WTC11 (cell line): ENCODE measurements at regions of chr14 and their contacts with region 1.

Region 1: DNA sequence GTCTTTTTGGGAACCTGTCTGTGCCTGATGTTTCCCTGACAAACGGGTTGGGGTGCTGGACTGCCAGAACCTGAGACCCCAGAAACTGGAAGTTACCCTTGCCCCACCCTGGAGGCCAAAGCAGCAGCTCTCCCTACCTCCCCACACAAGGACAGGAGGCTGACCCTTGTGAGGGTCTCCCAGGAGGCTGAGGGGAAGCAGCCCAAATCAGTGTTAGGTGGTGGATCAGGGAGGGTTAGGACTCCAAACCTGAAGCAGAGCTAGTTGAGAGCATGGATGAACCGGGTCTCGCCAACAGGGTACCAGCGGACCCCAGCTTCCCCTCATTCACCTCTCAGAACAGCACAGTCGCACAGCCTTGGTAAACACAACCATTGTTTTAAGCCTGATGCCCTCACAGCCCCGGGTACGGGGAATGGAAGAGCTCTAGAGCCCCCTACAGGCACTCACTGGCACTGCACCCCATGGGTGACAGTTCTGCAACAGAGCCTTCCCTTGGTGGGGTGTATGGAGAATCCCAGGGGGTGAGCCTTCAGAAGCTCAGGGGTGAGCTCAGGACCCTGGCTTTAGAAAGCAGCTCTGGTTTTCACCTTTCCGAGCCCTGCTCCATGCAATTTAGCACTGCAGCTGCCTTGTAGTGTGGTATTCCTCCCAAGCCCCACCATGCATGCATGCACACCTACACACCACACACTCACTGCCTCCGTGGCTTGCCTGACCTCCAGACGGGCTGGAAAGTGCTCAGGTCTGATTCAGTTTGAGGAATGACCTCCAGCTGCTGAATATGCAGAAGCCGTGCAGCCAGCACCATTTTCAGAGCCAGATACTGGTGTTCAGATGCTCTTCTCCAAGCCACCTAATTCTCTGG is 11.2 kb downstream of the ESRRB start:
- DNase-seq: peak; percentile 91
- ATAC-seq: peak; percentile 97
- H3K4me3 Mint-ChIP-seq: no peak overlapping the region
- H3K27ac Mint-ChIP-seq: no peak overlapping the region
- H3K4me1 Mint-ChIP-seq: peaks cover 4% of the 10 kb centered on the region; the same call in 1 of the 2 replicates
- H3K27me3 Mint-ChIP-seq: 0 out of 2 replicates have a peak, but pooled peaks cover 3% of the 10 kb centered on the region
- CTCF ChIP-seq: peak; percentile 99

Region 2: DNA sequence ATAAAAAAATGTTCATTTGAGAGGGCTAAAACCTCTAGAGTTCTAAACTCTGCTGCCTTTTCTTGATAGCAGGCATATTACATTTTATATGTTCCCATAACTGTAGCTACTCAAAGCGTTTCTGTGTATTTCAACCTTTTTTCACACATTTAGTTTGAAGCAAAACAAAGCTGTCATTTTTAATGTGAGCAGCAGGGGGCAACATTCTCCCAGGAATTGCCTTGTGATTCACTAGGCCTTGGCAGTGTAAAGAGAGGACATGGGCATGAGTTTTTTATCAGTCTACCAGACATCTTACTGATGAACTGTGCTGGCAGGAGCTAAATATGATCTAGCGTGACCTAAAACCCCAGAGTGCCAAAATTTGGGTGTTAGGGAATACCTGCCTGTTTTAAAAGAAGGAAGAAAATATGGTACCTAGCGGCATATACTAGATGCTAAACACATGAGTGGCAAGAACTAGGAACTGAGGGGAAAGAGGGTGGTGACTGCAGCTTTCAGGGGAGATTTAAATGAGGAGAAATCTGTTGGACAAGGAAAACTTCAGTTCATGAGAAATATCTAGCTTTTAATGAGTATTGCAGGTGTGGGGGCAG is 336.3 kb before region 1 on chr14:
- CTCF ChIA-PET with region 1: interaction called, 35 read pairs
- POLR2A ChIA-PET with region 1: no interaction called
- DNase-seq: peak; percentile 61
- ATAC-seq: peak; percentile 51
- H3K4me3 Mint-ChIP-seq: no peak overlapping the region
- H3K27ac Mint-ChIP-seq: no peak overlapping the region
- H3K4me1 Mint-ChIP-seq: peaks cover 3% of the 10 kb centered on the region
- H3K27me3 Mint-ChIP-seq: no peaks in the 10 kb centered on the region
- CTCF ChIP-seq: peak; percentile 76

Region 3: DNA sequence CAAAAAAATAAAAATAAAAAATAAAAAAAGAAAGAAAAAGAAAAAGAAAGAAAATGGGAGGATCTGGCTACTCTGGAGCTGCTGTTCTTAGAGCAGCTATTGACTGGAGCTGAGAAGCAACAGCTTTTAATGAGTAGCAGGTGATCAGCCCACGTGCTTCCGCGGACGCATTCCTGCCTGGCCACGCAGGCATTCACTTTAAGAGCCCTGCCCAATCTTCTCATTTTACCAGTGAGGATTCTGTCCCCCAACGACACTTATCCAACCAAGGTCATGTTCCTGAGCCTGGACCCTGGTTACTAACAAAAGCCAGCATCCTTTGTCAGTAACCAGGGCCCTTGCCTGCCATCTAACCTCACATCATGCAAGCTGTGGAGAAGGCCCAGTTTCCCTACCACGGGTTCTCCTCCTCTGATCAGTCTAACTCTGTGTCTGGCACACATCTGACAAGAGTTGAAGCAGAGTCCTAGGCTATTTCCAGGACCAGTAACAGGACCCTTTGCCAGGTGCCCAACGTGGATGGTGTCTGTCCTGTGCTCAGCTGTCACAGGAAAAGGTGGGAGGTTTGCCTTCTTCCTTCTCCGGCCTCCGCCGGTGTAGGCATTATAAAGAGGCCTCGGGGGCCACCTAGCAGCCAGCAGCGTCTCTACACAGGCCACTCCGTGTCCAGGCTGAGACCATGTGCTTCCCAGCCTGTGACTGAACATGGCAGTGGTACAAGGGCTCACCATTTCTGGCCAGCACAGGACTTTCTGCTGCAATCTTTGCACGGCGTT is 296.3 kb before region 1 on chr14:
- CTCF ChIA-PET with region 1: interaction called, 10 read pairs
- POLR2A ChIA-PET with region 1: no interaction called
- DNase-seq: no peak
- ATAC-seq: 0 out of 2 replicates have a peak, but pooled peaks have one; percentile 38
- H3K4me3 Mint-ChIP-seq: no peak overlapping the region
- H3K27ac Mint-ChIP-seq: no peak overlapping the region
- H3K4me1 Mint-ChIP-seq: peaks cover 28% of the 10 kb centered on the region
- H3K27me3 Mint-ChIP-seq: no peaks in the 10 kb centered on the region; the same call in 1 of the 2 replicates
- CTCF ChIP-seq: no peak

Region 4: GRCh38 chr14:76352639-76353281 is 34.4 kb before region 1 on chr14:
- CTCF ChIA-PET with region 1: interaction called, 24 read pairs
- POLR2A ChIA-PET with region 1: no interaction called
- DNase-seq: peak; percentile 88
- ATAC-seq: peak; percentile 90
- H3K4me3 Mint-ChIP-seq: peak overlapping the region; percentile 56
- H3K27ac Mint-ChIP-seq: no peak overlapping the region
- H3K4me1 Mint-ChIP-seq: peaks cover 30% of the 10 kb centered on the region
- H3K27me3 Mint-ChIP-seq: peaks cover 36% of the 10 kb centered on the region
- CTCF ChIP-seq: peak; percentile 64

Region 5: DNA sequence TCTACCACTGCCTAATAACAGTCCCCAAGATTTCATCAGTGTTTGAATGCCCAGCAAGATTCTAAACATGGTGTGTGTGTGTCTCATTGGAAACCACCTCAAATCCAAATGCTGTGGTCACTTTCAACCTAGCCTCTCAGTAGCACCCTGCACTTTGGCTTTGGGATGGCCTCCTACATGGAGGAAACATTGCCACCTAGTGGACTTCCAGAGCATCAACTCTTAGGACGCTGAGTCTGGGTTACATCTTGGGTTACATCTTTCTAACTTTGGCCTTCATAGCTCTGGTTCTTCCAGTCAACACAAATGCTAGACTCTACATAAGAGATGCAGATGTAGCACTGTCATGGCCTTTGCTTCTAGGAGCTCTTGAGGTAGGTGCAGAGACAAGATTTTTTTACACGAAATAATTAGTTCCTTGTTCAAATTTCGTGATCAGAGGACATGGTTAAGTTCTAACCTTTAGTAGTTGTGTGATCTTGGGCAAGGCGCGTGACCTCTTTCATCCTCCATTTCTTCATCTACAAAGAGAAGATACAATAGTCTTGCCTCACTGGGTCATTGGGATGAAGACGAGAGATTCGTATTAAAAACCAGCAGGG is 260.6 kb after region 1 on chr14:
- CTCF ChIA-PET with region 1: interaction called, 10 read pairs
- POLR2A ChIA-PET with region 1: no interaction called
- DNase-seq: peak; percentile 32
- ATAC-seq: peak; percentile 73
- H3K4me3 Mint-ChIP-seq: no peak overlapping the region
- H3K27ac Mint-ChIP-seq: no peak overlapping the region
- H3K4me1 Mint-ChIP-seq: peaks cover 13% of the 10 kb centered on the region
- H3K27me3 Mint-ChIP-seq: no peaks in the 10 kb centered on the region
- CTCF ChIP-seq: peak; percentile 69

Region 6: DNA sequence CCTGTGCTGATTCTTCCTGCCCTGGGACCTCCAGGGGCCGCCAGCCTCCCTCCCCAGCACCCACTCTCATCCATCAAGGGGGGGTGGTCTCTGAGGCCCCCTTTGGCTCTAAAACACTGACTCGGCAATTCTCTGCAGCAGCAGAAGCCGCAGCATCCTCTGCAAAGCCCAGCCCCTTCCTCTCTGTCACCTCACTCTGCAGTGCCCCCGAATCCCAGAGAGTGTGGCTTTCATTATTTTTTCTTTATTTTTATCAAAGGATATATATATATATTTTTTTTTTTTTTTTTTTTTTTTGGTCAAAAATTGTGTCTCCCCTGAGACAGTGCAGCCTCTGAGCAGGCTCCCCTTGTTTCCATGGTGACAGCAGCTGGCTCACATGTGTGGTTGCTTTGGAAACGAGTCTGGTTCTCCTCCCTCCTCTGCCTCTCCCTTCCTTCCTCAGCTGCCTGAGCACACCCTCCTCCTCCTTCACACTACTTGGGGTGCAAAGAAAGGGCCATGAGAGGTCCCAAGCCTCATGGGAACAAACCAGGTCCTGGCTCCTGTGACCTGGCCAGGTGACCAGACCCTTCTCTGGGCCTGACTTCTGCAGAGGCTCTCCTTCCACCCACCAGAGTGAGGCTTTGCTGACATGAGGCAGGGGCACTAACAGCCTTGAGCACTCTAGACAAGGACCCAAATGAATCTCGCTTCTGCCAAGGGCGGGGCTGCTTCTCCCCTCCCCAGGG is 539.5 kb after region 1 on chr14:
- CTCF ChIA-PET with region 1: no interaction called
- POLR2A ChIA-PET with region 1: no interaction called
- DNase-seq: no peak
- ATAC-seq: no peak
- H3K4me3 Mint-ChIP-seq: no peak overlapping the region
- H3K27ac Mint-ChIP-seq: 0 out of 2 replicates have a peak overlapping the region, but pooled peaks have one; percentile 23
- H3K4me1 Mint-ChIP-seq: peaks cover 78% of the 10 kb centered on the region
- H3K27me3 Mint-ChIP-seq: no peaks in the 10 kb centered on the region
- CTCF ChIP-seq: no peak